Psoas muscle (tissue), 8 donors: ENCODE measurements at regions of chr12 and their contacts with region 1.

Region 1: GRCh38 chr12:6451348-6452244 is at the start of gene TAPBPL:
- DNase-seq: peak; percentile 85 to 89
- ATAC-seq: peak; percentile 90 to 93 (median 91)
- H3K4me3 ChIP-seq: peak within 1 kb of the TSS; percentile 90
- H3K27ac ChIP-seq: peak within 1 kb of the TSS; percentile 95
- H3K4me1 ChIP-seq: peaks cover 11% of the 10 kb centered on the region
- H3K27me3 ChIP-seq: no peaks in the 10 kb centered on the region
- CTCF ChIP-seq: no peak
- total RNA-seq, gene TAPBPL: 6.4 to 11.3 (median 8.4) TPM

Region 2: DNA sequence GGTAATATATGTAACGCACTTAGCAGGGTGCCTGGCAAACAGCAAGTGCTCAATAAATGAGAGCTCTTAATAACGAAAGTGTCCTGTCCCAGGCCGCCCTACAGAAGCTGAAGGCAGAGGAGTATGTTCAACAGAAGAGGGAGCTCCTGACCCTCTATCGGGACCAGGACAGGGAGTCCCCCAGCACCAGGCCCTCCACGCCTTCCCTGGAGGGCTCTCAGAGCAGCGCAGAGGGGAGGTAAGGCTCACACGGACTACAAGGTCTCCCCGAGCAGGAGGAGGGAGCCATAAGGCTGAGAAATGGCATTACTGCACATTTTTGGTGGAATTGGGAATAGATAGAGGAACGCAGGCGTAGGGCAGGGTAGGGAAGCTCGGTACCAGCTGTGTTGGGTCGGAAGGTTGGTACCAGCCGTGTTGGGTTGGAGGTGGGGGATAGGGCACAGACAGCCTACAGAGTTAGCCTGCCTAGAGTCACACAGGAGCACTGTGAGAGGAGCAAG is 125.2 kb before region 1 on chr12:
- intact Hi-C with region 1: loop called in 1 of 2 experiments (anchors 5 kb)
- DNase-seq: peak; percentile 58 to 79
- ATAC-seq: peak; percentile 48 to 69 (median 54)
- H3K4me3 ChIP-seq: peak overlapping the region; percentile 5
- H3K27ac ChIP-seq: peak overlapping the region; percentile 47
- H3K4me1 ChIP-seq: peaks cover 65% of the 10 kb centered on the region
- H3K27me3 ChIP-seq: no peaks in the 10 kb centered on the region
- CTCF ChIP-seq: peak; percentile 63

Region 3: GRCh38 chr12:6524648-6525047 is 73.1 kb after region 1 on chr12:
- intact Hi-C with region 1: no loop called
- DNase-seq: no peak
- ATAC-seq: no peak
- H3K4me3 ChIP-seq: no peak overlapping the region
- H3K27ac ChIP-seq: no peak overlapping the region
- H3K4me1 ChIP-seq: no peaks in the 10 kb centered on the region
- H3K27me3 ChIP-seq: no peaks in the 10 kb centered on the region
- CTCF ChIP-seq: no peak

Region 4: DNA sequence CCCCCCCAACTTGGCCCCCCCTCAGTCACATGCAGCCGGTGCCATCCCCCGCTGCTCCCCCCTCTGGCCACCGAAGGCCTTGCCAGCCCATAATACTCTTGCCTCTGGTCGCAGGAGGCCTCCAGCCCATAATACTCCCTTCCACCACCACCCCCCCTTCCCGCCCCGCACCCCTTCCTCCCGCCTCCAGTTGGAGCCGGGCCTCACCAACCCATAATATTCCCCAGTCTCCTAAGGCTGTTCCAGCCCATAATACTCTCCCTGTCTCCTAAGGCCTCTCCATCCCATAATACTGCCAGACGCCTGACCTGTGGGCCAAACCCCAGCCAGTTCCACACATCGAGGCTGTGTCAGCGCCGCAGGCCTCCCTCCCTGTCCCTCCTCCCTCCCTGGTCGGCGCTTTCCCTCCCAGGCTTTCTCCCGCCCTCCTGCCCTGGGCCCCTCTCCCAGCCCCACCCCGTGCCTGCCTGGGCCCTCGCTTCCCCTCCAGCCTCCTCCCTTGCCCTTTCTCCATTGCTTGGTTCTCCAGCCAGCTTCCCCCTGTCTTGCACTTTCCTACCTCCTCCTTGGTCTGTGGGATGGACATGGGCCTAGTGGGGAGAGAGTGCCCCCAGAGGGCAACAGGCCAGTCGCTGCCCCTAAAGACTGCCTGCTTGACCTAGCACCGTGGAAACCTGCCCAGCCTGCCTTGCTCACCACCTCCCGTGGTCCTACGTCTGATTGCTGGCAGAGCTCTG is 162.3 kb after region 1 on chr12:
- intact Hi-C with region 1: no loop called
- DNase-seq: peak; percentile 88 to 95
- ATAC-seq: peak; percentile 58 to 80 (median 75)
- H3K4me3 ChIP-seq: no peak overlapping the region
- H3K27ac ChIP-seq: peak overlapping the region; percentile 72
- H3K4me1 ChIP-seq: peaks cover 13% of the 10 kb centered on the region
- H3K27me3 ChIP-seq: no peaks in the 10 kb centered on the region
- CTCF ChIP-seq: peak; percentile 7

Region 5: DNA sequence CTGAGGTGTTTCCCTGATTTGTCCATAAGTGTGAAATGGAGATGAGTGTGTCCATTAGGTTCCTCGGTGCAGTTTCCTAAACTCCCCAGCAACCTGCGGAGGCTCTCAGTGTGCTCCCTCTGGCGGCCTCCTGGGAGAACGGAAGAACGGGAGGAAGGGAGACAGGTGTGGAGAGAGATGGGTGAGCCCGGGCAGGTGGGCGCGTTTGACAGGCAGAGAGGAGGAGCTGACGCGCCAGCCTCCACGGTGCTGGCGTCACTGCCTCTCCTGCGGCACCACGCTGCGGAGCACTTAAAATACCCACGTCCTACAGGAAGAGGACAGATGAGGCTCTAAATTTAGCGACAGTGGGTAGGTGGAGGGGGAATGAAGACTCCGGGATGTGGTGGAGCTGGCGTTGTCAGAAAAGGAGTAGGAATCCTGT is 711.1 kb after region 1 on chr12:
- intact Hi-C with region 1: no loop called
- DNase-seq: no peak
- ATAC-seq: peak; percentile 39 to 75 (median 70)
- H3K4me3 ChIP-seq: no peak overlapping the region
- H3K27ac ChIP-seq: no peak overlapping the region
- H3K4me1 ChIP-seq: no peaks in the 10 kb centered on the region
- H3K27me3 ChIP-seq: peaks cover 0 to 24% (median 0%) of the 10 kb centered on the region in 3 donors
- CTCF ChIP-seq: peak; percentile 42